ENCODE measurements at regions of chr10 and their contacts with region 1.

Region 1: GRCh38 chr10:14604181-14605142 is 170.2 kb downstream of the FAM107B start:
- DNase-seq: peak; percentile 65 to 86
- ATAC-seq: peak; percentile 94

Region 2: GRCh38 chr10:14665304-14665703 is 60.8 kb after region 1 on chr10:
- intact Hi-C with region 1: loop called in 1 of 2 experiments (anchors 5 kb)
- DNase-seq: no peak
- ATAC-seq: peak; percentile 69

Region 3: GRCh38 chr10:15209827-15210509 is 605.5 kb after region 1 on chr10:
- intact Hi-C with region 1: no loop called
- DNase-seq: peak; percentile 70 to 92
- ATAC-seq: peak; percentile 87